ENCODE measurements at regions of chr6 and their contacts with region 1.

Region 1: DNA sequence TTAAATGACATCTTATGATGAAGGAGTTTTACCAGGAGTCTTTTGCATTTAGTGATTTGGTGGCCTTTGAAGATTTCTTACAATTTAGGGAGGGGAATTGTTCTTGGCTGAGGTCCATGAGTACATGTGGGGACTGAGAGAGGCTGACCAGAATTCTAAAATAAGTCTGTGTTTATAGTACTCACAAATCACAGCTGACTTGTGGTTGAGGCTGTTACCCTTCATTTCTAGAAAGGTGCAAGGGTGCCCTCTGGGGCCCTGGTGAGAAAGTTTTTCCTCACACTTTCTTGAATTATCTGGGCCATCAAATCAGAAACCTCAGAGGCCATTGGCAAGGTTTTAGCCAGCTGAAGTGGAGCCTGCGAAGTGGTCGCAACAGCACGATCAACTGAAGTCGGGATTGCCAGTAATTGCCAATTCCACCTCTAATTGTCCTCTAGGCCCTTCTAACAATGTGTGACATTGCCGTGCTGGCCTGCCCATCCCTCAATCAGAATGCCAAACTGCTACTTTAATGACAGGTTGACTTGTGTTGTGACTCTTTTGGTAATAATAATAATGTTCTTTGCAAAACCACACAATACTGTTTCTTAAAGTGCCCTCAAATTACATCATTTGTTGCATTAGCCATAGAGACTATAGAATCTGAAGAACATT is 221.6 kb downstream of the OGFRL1 start:
- DNase-seq: no peak
- ATAC-seq: peak; percentile 93
- H3K4me3 ChIP-seq: no peak overlapping the region
- H3K27ac ChIP-seq: no peak overlapping the region; the same call in 1 of the 2 replicates
- H3K4me1 ChIP-seq: no peaks in the 10 kb centered on the region
- H3K27me3 ChIP-seq: no peaks in the 10 kb centered on the region; the same call in 1 of the 2 replicates
- CTCF ChIP-seq: peak; percentile 81

Region 2: GRCh38 chr6:71181565-71181964 is 328.6 kb before region 1 on chr6:
- CTCF ChIA-PET with region 1: no interaction called
- POLR2A ChIA-PET with region 1: no interaction called
- in situ Hi-C with region 1: no loop called
- intact Hi-C with region 1: loop called (anchors 10 kb)
- DNase-seq: no peak
- ATAC-seq: no peak
- H3K4me3 ChIP-seq: no peak overlapping the region
- H3K27ac ChIP-seq: no peak overlapping the region
- H3K4me1 ChIP-seq: no peaks in the 10 kb centered on the region
- H3K27me3 ChIP-seq: 0 out of 2 replicates have a peak, but pooled peaks cover 2% of the 10 kb centered on the region
- CTCF ChIP-seq: no peak

Region 3: GRCh38 chr6:71268735-71269437 is 241.3 kb before region 1 on chr6:
- CTCF ChIA-PET with region 1: no interaction called
- POLR2A ChIA-PET with region 1: no interaction called
- in situ Hi-C with region 1: no loop called
- intact Hi-C with region 1: no loop called
- DNase-seq: no peak
- ATAC-seq: no peak
- H3K4me3 ChIP-seq: no peak overlapping the region
- H3K27ac ChIP-seq: no peak overlapping the region
- H3K4me1 ChIP-seq: no peaks in the 10 kb centered on the region
- H3K27me3 ChIP-seq: peaks cover 2% of the 10 kb centered on the region; the same call in 1 of the 2 replicates
- CTCF ChIP-seq: no peak

Measured in Panc1 (cell line).